ENCODE measurements at regions of chr3 and their contacts with region 1.

Region 1: DNA sequence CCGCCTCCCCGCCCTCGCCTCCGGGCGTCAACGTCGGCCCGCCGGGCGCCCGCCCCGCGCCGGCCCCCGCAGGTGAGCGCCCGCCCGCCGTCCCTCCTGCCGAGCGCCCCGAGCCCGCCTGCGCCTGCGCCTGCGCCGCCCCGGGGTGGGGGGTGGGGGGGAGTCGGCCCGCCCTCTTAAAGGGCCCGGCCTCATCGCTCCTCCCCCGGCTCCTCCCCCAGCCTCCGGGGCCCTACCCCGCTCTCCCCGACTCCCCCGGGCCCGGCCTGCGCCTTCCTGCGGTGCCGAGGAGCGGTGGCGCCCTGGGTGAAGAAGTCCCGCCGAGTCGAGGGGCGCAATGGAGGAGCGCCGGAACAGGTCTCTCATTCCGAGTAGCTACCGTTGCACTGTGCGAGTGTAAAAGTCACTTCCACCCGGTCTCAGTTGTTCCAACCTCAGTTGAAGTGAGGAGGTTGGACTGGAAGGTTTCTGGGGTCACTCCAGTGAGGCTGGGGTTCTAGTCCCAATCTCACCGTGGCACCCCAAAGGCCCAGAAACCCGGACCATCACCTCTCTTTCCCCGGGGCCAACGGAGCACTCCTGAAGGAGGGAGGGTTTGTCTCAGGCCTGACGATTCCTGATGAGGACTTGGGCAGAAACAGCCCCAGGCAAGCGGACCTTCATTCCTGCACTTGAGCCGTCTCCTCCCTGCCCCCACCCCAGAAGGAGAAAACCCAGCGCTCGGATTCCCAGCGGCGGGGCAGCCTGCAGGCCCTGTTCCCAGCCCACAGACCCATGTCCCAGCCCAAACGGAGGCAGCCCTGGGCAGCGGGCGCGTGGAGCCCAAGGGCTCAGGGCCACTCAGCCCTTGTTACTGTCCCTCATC is 1.5 kb upstream of the TNK2 start:
- DNase-seq: peak; percentile 58 to 92
- H3K4me3 ChIP-seq: peak overlapping the region; percentile 56
- H3K27ac ChIP-seq: no peak overlapping the region
- H3K4me1 ChIP-seq: peaks cover 68% of the 10 kb centered on the region
- H3K27me3 ChIP-seq: no peaks in the 10 kb centered on the region
- CTCF ChIP-seq: no peak

Region 2: GRCh38 chr3:195542698-195543499 is 367.0 kb before region 1 on chr3 and contains the start of gene PPP1R2:
- CTCF ChIA-PET with region 1: interaction called, 3 read pairs
- POLR2A ChIA-PET with region 1: interaction called, 17 read pairs
- intact Hi-C with region 1: no loop called
- DNase-seq: peak; percentile 80 to 95
- H3K4me3 ChIP-seq: peak within 1 kb of the TSS; percentile 78
- H3K27ac ChIP-seq: peak within 1 kb of the TSS; percentile 42
- H3K4me1 ChIP-seq: peaks cover 34% of the 10 kb centered on the region
- H3K27me3 ChIP-seq: no peaks in the 10 kb centered on the region
- CTCF ChIP-seq: no peak
- total RNA-seq, gene PPP1R2: 49.1 and 73.0 TPM in 2 replicates

Region 3: GRCh38 chr3:195558602-195559001 is 351.3 kb before region 1 on chr3:
- CTCF ChIA-PET with region 1: no interaction called
- POLR2A ChIA-PET with region 1: no interaction called
- intact Hi-C with region 1: loop called (anchors 5 kb)
- DNase-seq: peak; percentile 51 to 80
- H3K4me3 ChIP-seq: no peak overlapping the region
- H3K27ac ChIP-seq: peak overlapping the region; percentile 64
- H3K4me1 ChIP-seq: peaks cover 34% of the 10 kb centered on the region
- H3K27me3 ChIP-seq: no peaks in the 10 kb centered on the region
- CTCF ChIP-seq: peak; percentile 74

Region 4: GRCh38 chr3:195863121-195864006 is 46.5 kb before region 1 on chr3:
- CTCF ChIA-PET with region 1: interaction called, 10 read pairs
- POLR2A ChIA-PET with region 1: interaction called, 4 read pairs
- intact Hi-C with region 1: loop called (anchors 1 kb)
- DNase-seq: peak; percentile 78 to 95
- H3K4me3 ChIP-seq: no peak overlapping the region
- H3K27ac ChIP-seq: peak overlapping the region; percentile 23; the same call in 1 of the 2 replicates
- H3K4me1 ChIP-seq: peaks cover 18% of the 10 kb centered on the region
- H3K27me3 ChIP-seq: no peaks in the 10 kb centered on the region
- CTCF ChIP-seq: peak; percentile 95

Region 5: GRCh38 chr3:195870442-195870841 is 39.4 kb before region 1 on chr3:
- CTCF ChIA-PET with region 1: interaction called, 4 read pairs
- POLR2A ChIA-PET with region 1: no interaction called
- intact Hi-C with region 1: loop called (anchors 2 kb)
- DNase-seq: peak; percentile 90 to 91
- H3K4me3 ChIP-seq: peak overlapping the region; percentile 43; the same call in 1 of the 2 replicates
- H3K27ac ChIP-seq: peak overlapping the region; percentile 87
- H3K4me1 ChIP-seq: peaks cover 54% of the 10 kb centered on the region
- H3K27me3 ChIP-seq: no peaks in the 10 kb centered on the region
- CTCF ChIP-seq: no peak

Region 6: DNA sequence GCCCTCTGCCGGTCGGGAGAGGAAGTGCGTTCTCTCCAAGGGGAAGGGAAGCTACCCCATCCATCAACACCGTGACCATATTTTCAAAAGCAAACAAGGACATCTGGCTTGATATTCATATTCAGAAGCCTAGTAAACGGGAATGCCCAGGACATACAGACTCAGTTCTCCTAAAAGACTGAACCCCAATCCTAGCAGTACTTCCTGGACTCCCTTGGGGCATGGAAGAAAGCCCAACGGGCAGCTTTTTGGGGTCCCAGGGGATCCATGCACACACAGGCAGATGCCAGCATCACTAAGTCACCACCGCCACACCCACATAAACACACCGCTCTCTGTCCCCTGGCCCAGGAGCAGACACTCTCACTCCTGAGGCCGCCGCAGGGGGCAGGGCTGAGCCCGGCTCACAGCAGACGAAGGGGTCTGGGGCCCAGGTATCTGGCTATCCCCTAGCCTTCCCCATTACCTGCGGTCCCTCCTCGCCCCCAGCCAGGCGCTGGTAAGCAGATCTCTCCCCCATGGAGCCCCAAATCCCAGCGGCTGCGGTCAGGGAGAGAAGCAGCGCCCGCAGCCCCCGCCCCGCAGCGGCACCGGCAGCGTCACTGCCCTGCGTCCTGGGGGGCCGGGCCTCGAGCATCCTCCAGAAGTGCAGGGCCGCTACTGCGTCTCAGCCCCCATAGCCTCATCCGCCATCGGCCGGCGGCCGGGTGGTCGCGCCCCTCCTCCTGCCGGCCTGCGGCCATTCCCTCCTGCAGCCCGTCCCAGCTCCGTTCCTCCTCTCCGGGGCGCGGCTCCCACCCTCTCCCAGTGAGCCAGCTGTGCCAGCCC is 14.9 kb before region 1 on chr3:
- CTCF ChIA-PET with region 1: interaction called, 42 read pairs
- POLR2A ChIA-PET with region 1: interaction called, 5 read pairs
- intact Hi-C with region 1: loop called (anchors 1 kb)
- DNase-seq: peak; percentile 84 to 86
- H3K4me3 ChIP-seq: peak overlapping the region; percentile 96
- H3K27ac ChIP-seq: peak overlapping the region; percentile 42
- H3K4me1 ChIP-seq: peaks cover 34% of the 10 kb centered on the region
- H3K27me3 ChIP-seq: no peaks in the 10 kb centered on the region
- CTCF ChIP-seq: peak; percentile 98

Region 7: DNA sequence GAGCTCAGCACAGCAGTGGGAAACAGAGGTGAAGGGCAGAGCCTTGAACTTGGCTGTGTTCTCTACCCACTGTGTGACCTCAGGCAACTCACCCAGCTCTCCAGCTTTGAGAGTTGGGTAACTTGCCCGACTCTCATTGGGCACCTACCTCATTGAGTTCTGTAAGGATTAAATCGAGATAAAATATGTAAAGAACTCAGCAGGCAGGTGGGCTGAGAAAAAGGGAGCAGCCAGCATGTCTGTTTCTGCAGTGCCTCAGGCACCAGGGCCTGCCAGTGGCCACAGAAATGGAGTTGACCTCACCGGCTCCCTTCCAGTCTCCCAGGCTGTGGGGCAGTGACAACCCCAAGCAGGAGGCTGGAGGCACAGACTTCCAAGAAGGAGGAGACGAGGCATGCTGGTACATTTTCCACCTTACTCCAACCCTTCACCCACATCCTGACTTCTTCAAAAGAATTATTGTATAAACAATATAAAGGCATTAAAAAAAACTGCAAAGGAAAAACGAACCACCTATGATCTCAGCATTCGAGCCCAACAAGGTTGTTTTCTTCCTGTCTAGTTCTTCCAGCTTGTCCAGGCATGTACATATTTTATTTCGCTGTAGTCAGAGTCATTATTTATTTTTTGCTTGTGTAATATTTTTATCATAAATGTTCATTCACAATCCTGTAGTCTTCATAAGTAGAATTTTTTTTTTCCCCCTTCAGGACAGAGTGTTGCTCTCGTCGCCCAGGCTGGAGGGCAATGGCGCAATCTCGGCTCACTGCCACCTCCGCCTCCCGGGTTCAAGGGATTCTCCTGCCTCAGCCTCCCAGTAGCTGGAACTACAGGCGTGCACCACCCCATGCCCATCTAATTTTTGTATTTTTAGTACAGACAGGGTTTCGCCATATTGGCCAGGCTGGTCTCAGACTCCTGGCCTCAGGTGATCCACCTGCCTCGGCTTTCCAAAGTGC is 226.4 kb after region 1 on chr3:
- CTCF ChIA-PET with region 1: no interaction called
- POLR2A ChIA-PET with region 1: no interaction called
- intact Hi-C with region 1: no loop called
- DNase-seq: peak; percentile 90 to 99
- H3K4me3 ChIP-seq: peak overlapping the region; percentile 15; the same call in 1 of the 2 replicates
- H3K27ac ChIP-seq: peak overlapping the region; percentile 85
- H3K4me1 ChIP-seq: peaks cover 70% of the 10 kb centered on the region
- H3K27me3 ChIP-seq: no peaks in the 10 kb centered on the region
- CTCF ChIP-seq: no peak